ENCODE measurements at regions of chr6 and their contacts with region 1.

Region 1: DNA sequence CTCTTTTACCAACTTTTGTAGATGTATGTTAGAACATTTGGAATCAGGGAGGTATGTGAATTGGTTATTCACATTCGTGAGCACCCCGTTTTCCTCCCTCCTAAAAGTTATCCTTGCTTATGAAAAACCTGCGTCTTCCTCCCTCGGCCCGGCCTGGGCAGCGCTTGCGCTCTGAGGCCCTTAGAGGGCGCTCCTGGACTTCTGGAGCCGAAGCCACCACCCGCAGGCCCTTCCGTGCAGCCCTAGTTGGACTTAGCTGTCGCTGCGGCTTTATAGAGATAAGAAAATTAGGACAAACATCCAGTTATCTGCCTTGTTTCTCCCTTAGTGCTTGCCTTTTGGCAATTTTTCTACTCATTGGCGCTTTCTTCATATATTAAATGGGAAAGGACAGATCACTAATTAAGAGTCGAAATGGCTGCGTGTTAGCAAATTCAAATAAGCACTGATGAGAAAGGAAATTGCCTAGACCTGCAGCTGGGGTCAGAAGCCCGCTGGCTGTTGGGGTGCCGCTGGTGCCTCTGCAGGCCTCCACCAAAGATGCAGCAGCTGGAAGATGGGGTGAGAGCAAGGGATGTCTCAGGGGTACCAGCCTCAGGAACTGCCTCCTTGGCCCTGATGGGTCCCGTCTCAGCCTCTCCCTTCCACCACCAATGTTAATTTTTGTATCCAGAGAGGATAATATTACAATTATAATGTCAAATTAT is 5.2 kb downstream of the FNDC1 start:
- DNase-seq: peak; percentile 46
- H3K4me3 ChIP-seq: no peak overlapping the region
- H3K27ac ChIP-seq: no peak overlapping the region
- H3K4me1 ChIP-seq: peaks cover 10% of the 10 kb centered on the region
- H3K27me3 ChIP-seq: peaks cover 18% of the 10 kb centered on the region
- CTCF ChIP-seq: peak; percentile 97 to 100

Region 2: GRCh38 chr6:159311618-159312017 is 137.2 kb after region 1 on chr6:
- CTCF ChIA-PET with region 1: no interaction called
- dilution Hi-C with region 1: no loop called
- in situ Hi-C with region 1: no loop called
- intact Hi-C with region 1: loop called (anchors 1 kb)
- DNase-seq: peak; percentile 21
- H3K4me3 ChIP-seq: no peak overlapping the region
- H3K27ac ChIP-seq: no peak overlapping the region
- H3K4me1 ChIP-seq: no peaks in the 10 kb centered on the region
- H3K27me3 ChIP-seq: no peaks in the 10 kb centered on the region
- CTCF ChIP-seq: peak; percentile 30 to 33

Region 3: GRCh38 chr6:159324596-159324995 is 150.2 kb after region 1 on chr6:
- CTCF ChIA-PET with region 1: no interaction called
- dilution Hi-C with region 1: no loop called
- in situ Hi-C with region 1: no loop called
- intact Hi-C with region 1: no loop called
- DNase-seq: no peak
- H3K4me3 ChIP-seq: no peak overlapping the region
- H3K27ac ChIP-seq: no peak overlapping the region
- H3K4me1 ChIP-seq: no peaks in the 10 kb centered on the region
- H3K27me3 ChIP-seq: no peaks in the 10 kb centered on the region
- CTCF ChIP-seq: no peak

Region 4: DNA sequence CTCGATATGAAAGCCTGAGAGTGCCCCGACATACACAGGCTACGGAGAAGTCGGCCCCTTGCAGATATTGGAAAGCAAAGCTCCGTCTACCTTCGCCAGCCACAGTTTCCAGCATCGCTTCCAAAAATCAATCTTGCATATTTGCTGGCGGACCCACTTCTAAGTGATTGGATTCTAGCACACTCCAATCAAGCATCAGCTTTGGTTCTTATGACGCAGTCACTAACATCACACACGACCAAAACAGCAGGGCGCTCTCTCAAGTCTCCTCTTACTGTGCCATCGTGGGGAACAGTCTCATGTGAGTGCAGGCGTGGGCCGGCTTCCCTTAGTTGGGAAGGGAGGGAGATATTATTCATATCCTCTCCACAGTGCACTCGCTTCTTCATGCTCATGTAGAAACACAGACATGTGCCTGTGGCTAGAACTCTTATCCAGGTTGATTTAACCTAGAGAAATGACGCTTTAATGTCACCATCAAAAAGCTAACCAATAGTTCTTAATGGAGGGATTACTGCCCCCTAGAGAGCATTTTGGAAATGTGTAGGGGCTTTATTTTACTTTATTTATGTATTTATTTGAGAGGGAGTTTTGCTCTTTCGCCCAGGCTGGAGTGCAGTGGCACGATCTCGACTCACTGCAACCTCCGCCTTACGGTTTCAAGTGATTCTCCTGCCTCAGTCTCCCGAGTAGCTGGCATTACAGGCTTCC is 288.9 kb after region 1 on chr6:
- CTCF ChIA-PET with region 1: no interaction called
- dilution Hi-C with region 1: no loop called
- in situ Hi-C with region 1: loop called in 1 of 2 experiments (anchors 5 kb)
- intact Hi-C with region 1: loop called (anchors 1 kb)
- DNase-seq: peak; percentile 11
- H3K4me3 ChIP-seq: no peak overlapping the region
- H3K27ac ChIP-seq: no peak overlapping the region
- H3K4me1 ChIP-seq: no peaks in the 10 kb centered on the region
- H3K27me3 ChIP-seq: peaks cover 2% of the 10 kb centered on the region
- CTCF ChIP-seq: peak; percentile 27 to 31

Region 5: DNA sequence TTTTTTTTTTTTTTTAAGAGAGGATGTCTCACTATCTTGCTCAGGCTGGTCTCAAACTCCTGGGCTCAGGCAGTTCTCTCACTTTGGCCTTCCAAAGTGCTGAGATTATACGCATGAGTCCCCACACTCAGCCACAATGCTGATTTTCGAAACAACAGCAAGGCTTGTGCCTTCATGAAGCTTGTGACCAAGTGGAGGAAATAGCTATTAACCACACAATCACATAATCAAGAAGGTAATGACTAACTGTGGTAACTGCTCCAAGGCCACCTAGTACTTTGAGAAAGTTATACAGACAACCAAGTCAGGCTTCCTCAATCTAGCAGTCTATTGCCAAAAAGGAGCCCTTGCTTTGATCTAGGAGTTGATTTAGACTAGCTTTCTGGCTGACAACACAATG is 472.3 kb after region 1 on chr6:
- CTCF ChIA-PET with region 1: interaction called, 3 read pairs
- dilution Hi-C with region 1: loop called (anchors 5 kb)
- in situ Hi-C with region 1: loop called in 1 of 2 experiments (anchors 10 kb)
- intact Hi-C with region 1: no loop called
- DNase-seq: peak; percentile 74
- H3K4me3 ChIP-seq: no peak overlapping the region
- H3K27ac ChIP-seq: no peak overlapping the region
- H3K4me1 ChIP-seq: no peaks in the 10 kb centered on the region
- H3K27me3 ChIP-seq: no peaks in the 10 kb centered on the region
- CTCF ChIP-seq: no peak

Measured in mammary epithelial cell (primary cell).